ENCODE measurements at regions of chr4 and their contacts with region 1.

Region 1: GRCh38 chr4:113355550-113356371 is 306.3 kb downstream of the ANK2 start:
- DNase-seq: peak; percentile 91
- H3K4me3 Mint-ChIP-seq: peak overlapping the region; percentile 59
- H3K27ac Mint-ChIP-seq: peak overlapping the region; percentile 98
- H3K4me1 Mint-ChIP-seq: peaks cover 39% of the 10 kb centered on the region
- H3K27me3 Mint-ChIP-seq: peaks cover 42% of the 10 kb centered on the region

Region 2: GRCh38 chr4:112817933-112818593 is 537.7 kb before region 1 on chr4:
- CTCF ChIA-PET with region 1: interaction called, 3 read pairs
- intact Hi-C with region 1: loop called (anchors 2 kb)
- DNase-seq: peak; percentile 88
- H3K4me3 Mint-ChIP-seq: peak overlapping the region; percentile 79
- H3K27ac Mint-ChIP-seq: peak overlapping the region; percentile 62
- H3K4me1 Mint-ChIP-seq: peaks cover 15% of the 10 kb centered on the region
- H3K27me3 Mint-ChIP-seq: peaks cover 36% of the 10 kb centered on the region

Region 3: GRCh38 chr4:113316879-113317278 is 38.9 kb before region 1 on chr4:
- CTCF ChIA-PET with region 1: no interaction called
- intact Hi-C with region 1: loop called (anchors 1 kb)
- DNase-seq: peak; percentile 38
- H3K4me3 Mint-ChIP-seq: no peak overlapping the region
- H3K27ac Mint-ChIP-seq: no peak overlapping the region
- H3K4me1 Mint-ChIP-seq: peaks cover 8% of the 10 kb centered on the region
- H3K27me3 Mint-ChIP-seq: peaks cover 5% of the 10 kb centered on the region

Region 4: GRCh38 chr4:113474017-113474416 is 118.3 kb after region 1 on chr4:
- CTCF ChIA-PET with region 1: no interaction called
- intact Hi-C with region 1: loop called (anchors 1 kb)
- DNase-seq: peak; percentile 55
- H3K4me3 Mint-ChIP-seq: no peak overlapping the region
- H3K27ac Mint-ChIP-seq: peak overlapping the region; percentile 84
- H3K4me1 Mint-ChIP-seq: peaks cover 56% of the 10 kb centered on the region
- H3K27me3 Mint-ChIP-seq: no peaks in the 10 kb centered on the region

Region 5: GRCh38 chr4:113636438-113636818 is 280.7 kb after region 1 on chr4:
- CTCF ChIA-PET with region 1: no interaction called
- intact Hi-C with region 1: no loop called
- DNase-seq: peak; percentile 26
- H3K4me3 Mint-ChIP-seq: peak overlapping the region; percentile 23
- H3K27ac Mint-ChIP-seq: peak overlapping the region; percentile 83
- H3K4me1 Mint-ChIP-seq: peaks cover 46% of the 10 kb centered on the region
- H3K27me3 Mint-ChIP-seq: no peaks in the 10 kb centered on the region

Region 6: GRCh38 chr4:113823291-113823659 is 467.5 kb after region 1 on chr4:
- CTCF ChIA-PET with region 1: no interaction called
- intact Hi-C with region 1: loop called (anchors 1 kb)
- DNase-seq: no peak
- H3K4me3 Mint-ChIP-seq: no peak overlapping the region
- H3K27ac Mint-ChIP-seq: no peak overlapping the region
- H3K4me1 Mint-ChIP-seq: peaks cover 66% of the 10 kb centered on the region
- H3K27me3 Mint-ChIP-seq: no peaks in the 10 kb centered on the region

Region 7: DNA sequence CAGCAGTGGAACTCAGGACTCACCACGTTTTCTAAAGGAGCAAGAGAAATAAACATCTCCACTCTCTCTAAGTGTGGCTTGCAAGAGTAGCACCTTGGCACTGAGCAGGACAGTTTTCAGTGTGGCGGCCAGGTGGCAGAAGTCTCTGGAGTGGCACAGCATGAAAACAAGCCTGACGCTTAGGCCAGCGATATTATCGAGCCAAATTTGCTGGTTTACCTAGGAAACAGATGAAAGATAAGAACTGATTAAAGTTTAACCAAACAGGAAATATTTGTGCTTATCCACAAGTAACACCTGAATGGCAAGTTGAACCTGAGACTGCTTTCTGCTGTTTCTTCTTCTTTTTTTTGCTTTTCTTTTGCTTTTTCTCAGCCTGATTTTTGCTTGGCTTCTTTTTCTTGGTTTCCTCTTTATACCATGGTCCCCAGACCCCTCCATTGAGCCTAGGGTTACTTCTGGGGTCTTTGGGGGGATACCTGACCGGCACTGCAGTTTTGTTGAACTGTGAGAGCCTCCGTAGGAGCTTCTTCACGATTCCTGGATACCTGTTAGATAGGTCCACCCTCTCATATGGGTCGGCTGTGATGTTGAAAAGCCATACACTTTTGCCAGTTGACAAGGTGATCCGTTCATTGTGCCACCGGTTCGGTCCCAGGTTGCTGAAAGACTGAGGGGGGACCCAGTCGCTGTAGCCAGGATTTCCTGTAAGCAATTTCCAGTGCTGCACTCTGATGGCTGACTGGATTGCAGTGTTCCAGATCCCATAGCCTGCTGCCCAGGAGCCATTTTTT is 546.4 kb after region 1 on chr4:
- CTCF ChIA-PET with region 1: no interaction called
- intact Hi-C with region 1: loop called (anchors 1 kb)
- DNase-seq: peak; percentile 82
- H3K4me3 Mint-ChIP-seq: peak overlapping the region; percentile 65
- H3K27ac Mint-ChIP-seq: peak overlapping the region; percentile 82
- H3K4me1 Mint-ChIP-seq: peaks cover 58% of the 10 kb centered on the region
- H3K27me3 Mint-ChIP-seq: no peaks in the 10 kb centered on the region

Measured in activated naive CD4-positive, alpha-beta T cell treated with anti-CD3 and anti-CD28 coated beads for 36 hours (primary cell).